IMR-90 (cell line): ENCODE measurements at regions of chr21 and their contacts with region 1.

Region 1: DNA sequence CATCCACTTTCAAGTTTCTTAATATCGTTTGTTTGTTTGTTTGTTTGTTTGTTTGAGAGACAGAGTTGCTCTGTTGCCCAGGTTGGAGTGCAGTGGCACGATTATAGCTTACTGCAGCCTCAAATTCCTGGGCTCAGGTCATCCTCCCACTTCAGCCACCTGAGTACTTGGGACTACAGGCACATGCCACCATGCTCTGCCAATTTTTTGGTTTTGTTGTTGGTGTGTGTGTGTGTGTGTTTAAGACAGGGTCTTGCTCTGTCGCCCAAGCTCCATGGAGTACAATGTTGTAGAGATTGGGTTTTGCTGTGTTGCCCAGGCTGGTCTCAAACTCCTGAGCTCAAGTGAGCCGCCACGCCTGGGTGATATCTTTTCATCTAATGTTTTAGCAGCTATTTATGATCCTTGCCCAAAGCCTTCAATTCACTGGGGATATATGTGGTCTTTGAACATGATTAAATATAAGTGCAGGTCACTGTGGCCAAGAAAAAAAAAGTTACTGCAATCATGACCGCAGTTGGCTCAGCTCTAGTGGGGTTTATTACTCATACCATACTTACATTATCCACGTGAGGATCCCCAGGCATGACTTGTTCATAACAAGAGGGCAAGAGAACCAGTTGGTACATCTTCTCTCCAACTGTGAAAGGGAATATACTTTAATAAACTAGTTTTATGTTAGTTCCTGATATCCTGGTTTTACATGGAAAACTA is 8.0 kb downstream of the RRP1B start:
- DNase-seq: peak; percentile 81
- ATAC-seq: peak; percentile 62; the same call in 1 of the 2 replicates
- H3K4me3 ChIP-seq: no peak overlapping the region
- H3K27ac ChIP-seq: no peak overlapping the region
- H3K4me1 ChIP-seq: no peaks in the 10 kb centered on the region
- H3K27me3 ChIP-seq: no peaks in the 10 kb centered on the region
- CTCF ChIP-seq: no peak
- POLR2A ChIP-seq: no peak
- RAD21 ChIP-seq: no peak

Region 2: DNA sequence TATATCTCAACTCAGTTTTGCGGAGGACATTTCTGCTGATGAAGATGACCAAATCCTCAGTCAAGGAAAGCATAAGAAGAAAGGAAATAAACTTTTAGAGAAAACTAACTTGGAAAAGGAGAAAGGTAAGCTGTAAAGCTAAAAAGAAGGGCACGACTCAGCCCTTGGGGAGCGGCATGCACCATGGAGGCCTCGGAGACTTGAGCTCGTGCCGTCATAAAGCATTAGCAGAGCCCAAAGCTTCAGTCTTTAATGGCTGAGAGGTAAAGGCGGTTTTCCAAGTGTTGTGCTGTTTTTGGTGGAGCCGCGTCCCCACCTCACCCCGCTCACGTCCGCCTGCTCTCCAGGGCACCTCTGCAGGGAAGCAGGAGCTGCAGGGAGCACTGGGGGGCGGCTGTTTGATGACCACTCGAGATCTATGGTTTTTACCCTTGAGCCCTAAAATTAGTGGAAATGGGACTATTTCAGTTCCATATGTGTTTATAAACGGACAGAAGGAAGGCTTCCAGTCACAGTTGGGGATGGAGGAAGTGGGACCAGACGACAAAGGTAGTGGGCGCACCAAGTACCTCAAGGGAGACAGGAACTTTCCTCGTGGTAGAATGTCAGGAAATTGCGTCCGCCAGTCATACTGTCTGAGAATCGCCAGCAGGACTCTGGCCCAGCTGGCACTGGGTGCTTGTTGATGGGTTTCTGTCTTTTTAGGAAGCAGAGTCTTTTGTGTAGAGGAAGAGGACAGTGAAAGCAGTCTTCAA is 19.6 kb after region 1 on chr21:
- CTCF ChIA-PET with region 1: no interaction called
- POLR2A ChIA-PET with region 1: interaction called, 11 read pairs
- dilution Hi-C with region 1: no loop called
- in situ Hi-C with region 1: no loop called
- intact Hi-C with region 1: no loop called
- DNase-seq: no peak
- ATAC-seq: no peak
- H3K4me3 ChIP-seq: no peak overlapping the region
- H3K27ac ChIP-seq: no peak overlapping the region
- H3K4me1 ChIP-seq: no peaks in the 10 kb centered on the region
- H3K27me3 ChIP-seq: no peaks in the 10 kb centered on the region
- CTCF ChIP-seq: no peak
- POLR2A ChIP-seq: no peak
- RAD21 ChIP-seq: no peak

Region 3: GRCh38 chr21:43728467-43729390 is 61.4 kb after region 1 on chr21:
- CTCF ChIA-PET with region 1: no interaction called
- POLR2A ChIA-PET with region 1: no interaction called
- dilution Hi-C with region 1: no loop called
- in situ Hi-C with region 1: no loop called
- intact Hi-C with region 1: loop called (anchors 10 kb)
- DNase-seq: peak; percentile 98
- ATAC-seq: peak; percentile 90
- H3K4me3 ChIP-seq: peak overlapping the region; percentile 35
- H3K27ac ChIP-seq: peak overlapping the region; percentile 85
- H3K4me1 ChIP-seq: peaks cover 28% of the 10 kb centered on the region
- H3K27me3 ChIP-seq: no peaks in the 10 kb centered on the region
- CTCF ChIP-seq: 0 out of 2 replicates have a peak, but pooled peaks have one; percentile 22
- POLR2A ChIP-seq: peak; percentile 58
- RAD21 ChIP-seq: peak; percentile 35

Region 4: DNA sequence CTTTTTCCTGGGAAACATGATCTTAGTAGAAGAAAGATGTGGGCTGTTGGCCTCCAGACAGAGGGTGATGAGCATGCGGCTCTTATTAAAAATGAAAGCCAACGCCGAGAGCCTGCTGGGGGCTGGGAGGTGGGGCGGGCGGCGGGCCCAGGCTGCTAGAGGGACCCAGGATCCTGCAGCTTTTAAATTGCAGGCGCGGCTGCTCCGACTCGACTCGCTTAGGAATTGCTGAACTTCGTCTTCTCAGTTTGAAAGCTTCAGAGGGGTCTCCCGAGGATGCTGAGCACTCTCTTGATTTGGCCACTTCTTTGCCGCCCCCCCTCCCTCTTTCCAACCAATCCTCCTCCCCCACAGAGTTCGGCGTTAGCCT is 198.9 kb after region 1 on chr21:
- CTCF ChIA-PET with region 1: no interaction called
- POLR2A ChIA-PET with region 1: no interaction called
- dilution Hi-C with region 1: no loop called
- in situ Hi-C with region 1: no loop called
- intact Hi-C with region 1: no loop called
- DNase-seq: peak; percentile 57
- ATAC-seq: peak; percentile 58
- H3K4me3 ChIP-seq: peak overlapping the region; percentile 90
- H3K27ac ChIP-seq: peak overlapping the region; percentile 95; the same call in 1 of the 2 replicates
- H3K4me1 ChIP-seq: peaks cover 12% of the 10 kb centered on the region
- H3K27me3 ChIP-seq: no peaks in the 10 kb centered on the region
- CTCF ChIP-seq: no peak
- POLR2A ChIP-seq: no peak
- RAD21 ChIP-seq: no peak